CD4-positive, alpha-beta T cell (primary cell): ENCODE measurements at regions of chr1 and their contacts with region 1.

Region 1: DNA sequence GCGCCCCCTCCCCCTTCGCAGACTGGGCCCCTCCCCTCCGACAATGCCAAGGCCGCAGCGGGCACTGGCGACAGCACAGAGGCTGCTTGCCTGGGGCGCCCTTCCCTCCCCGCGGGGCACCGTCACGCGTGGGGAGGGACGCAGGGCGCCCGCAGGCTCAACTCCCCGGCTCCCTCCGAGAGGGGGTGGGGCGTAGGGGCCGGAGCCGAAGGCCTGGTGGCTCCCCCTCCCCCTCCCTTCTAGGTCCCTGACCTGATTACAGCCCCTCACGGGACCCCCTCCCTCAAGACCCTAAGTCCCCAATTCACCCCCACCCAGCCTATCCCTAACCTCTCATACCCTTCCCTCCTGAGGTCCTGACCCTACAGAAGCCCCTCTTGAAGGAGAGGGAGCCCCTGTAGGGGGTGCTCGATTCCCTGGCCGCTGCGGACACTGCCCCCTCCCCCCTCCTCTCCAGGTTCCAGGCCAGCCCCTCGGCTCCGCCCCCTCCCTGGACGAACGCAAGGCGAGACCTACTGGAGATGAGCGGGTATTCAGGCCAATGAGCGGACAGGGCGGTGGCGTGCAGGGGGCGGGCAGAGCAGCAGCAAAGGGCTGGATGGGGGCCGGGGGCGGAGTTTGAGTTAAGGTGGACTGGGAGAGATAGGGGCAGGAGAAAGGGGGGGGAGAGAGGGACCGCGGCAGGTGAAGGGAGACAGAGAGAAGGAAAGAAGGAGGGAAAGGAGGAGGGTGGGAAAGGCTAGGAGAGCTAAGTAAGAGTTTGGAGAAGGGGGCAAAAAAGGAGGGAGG is 733 bp upstream of the ZBTB7B start:
- DNase-seq: peak; percentile 94 to 99 (median 98)
- ATAC-seq: peak; percentile 73
- H3K4me3 ChIP-seq: peak overlapping the region; percentile 73
- H3K4me3 Mint-ChIP-seq: peak overlapping the region; percentile 99
- H3K27ac ChIP-seq: peak overlapping the region; percentile 92 to 96
- H3K27ac Mint-ChIP-seq: peak overlapping the region; percentile 90
- H3K4me1 ChIP-seq: peaks cover 80% of the 10 kb centered on the region
- H3K4me1 Mint-ChIP-seq: peaks cover 65% of the 10 kb centered on the region
- H3K27me3 ChIP-seq: no peaks in the 10 kb centered on the region
- H3K27me3 Mint-ChIP-seq: no peaks in the 10 kb centered on the region
- CTCF ChIP-seq: no peak

Region 2: GRCh38 chr1:154955718-154956543 is 45.9 kb before region 1 on chr1 and contains the start of gene PBXIP1:
- CTCF ChIA-PET with region 1: interaction called, 24 read pairs
- POLR2A ChIA-PET with region 1: interaction called, 28 read pairs
- intact Hi-C with region 1: loop called in 1 of 2 experiments (anchors 1 kb)
- DNase-seq: peak; percentile 64 to 95 (median 78)
- ATAC-seq: peak; percentile 40
- H3K4me3 ChIP-seq: peak within 1 kb of the TSS; percentile 69
- H3K4me3 Mint-ChIP-seq: peak within 1 kb of the TSS; percentile 95
- H3K27ac ChIP-seq: peak within 1 kb of the TSS; percentile 100
- H3K27ac Mint-ChIP-seq: peak within 1 kb of the TSS; percentile 96
- H3K4me1 ChIP-seq: peaks cover 96% of the 10 kb centered on the region
- H3K4me1 Mint-ChIP-seq: peaks cover 57% of the 10 kb centered on the region
- H3K27me3 ChIP-seq: no peaks in the 10 kb centered on the region
- H3K27me3 Mint-ChIP-seq: no peaks in the 10 kb centered on the region
- CTCF ChIP-seq: peak; percentile 40
- total RNA-seq, gene PBXIP1: 434 to 440 TPM

Region 3: GRCh38 chr1:154974063-154974807 is 27.6 kb before region 1 on chr1 and contains the start of gene CKS1B:
- CTCF ChIA-PET with region 1: interaction called, 24 read pairs
- POLR2A ChIA-PET with region 1: interaction called, 34 read pairs
- intact Hi-C with region 1: loop called (anchors 1 to 2 kb)
- DNase-seq: peak; percentile 93 to 100 (median 96)
- ATAC-seq: peak; percentile 87
- H3K4me3 ChIP-seq: peak within 1 kb of the TSS; percentile 81
- H3K4me3 Mint-ChIP-seq: no peak within 1 kb of the TSS
- H3K27ac ChIP-seq: peak within 1 kb of the TSS; percentile 94 to 99
- H3K27ac Mint-ChIP-seq: no peak within 1 kb of the TSS
- H3K4me1 ChIP-seq: peaks cover 49% of the 10 kb centered on the region
- H3K4me1 Mint-ChIP-seq: peaks cover 26% of the 10 kb centered on the region
- H3K27me3 ChIP-seq: no peaks in the 10 kb centered on the region
- H3K27me3 Mint-ChIP-seq: no peaks in the 10 kb centered on the region
- CTCF ChIP-seq: no peak
- total RNA-seq, gene CKS1B: 1.4 to 3.9 TPM

Region 4: GRCh38 chr1:155012026-155012546 is 10.2 kb after region 1 on chr1:
- CTCF ChIA-PET with region 1: interaction called, 159 read pairs
- POLR2A ChIA-PET with region 1: interaction called, 189 read pairs
- intact Hi-C with region 1: loop called (anchors 1 kb)
- DNase-seq: peak in 4 of 14 experiments; percentile 42 to 58 (median 51)
- ATAC-seq: no peak
- H3K4me3 ChIP-seq: peak overlapping the region; percentile 89
- H3K4me3 Mint-ChIP-seq: peak overlapping the region; percentile 91
- H3K27ac ChIP-seq: peak overlapping the region; percentile 87 to 88
- H3K27ac Mint-ChIP-seq: peak overlapping the region; percentile 92
- H3K4me1 ChIP-seq: peaks cover 99% of the 10 kb centered on the region
- H3K4me1 Mint-ChIP-seq: peaks cover 80% of the 10 kb centered on the region
- H3K27me3 ChIP-seq: no peaks in the 10 kb centered on the region
- H3K27me3 Mint-ChIP-seq: no peaks in the 10 kb centered on the region
- CTCF ChIP-seq: no peak

Region 5: GRCh38 chr1:155285063-155285462 is 283.2 kb after region 1 on chr1:
- CTCF ChIA-PET with region 1: no interaction called
- POLR2A ChIA-PET with region 1: no interaction called
- intact Hi-C with region 1: no loop called
- DNase-seq: no peak
- ATAC-seq: no peak
- H3K4me3 ChIP-seq: no peak overlapping the region
- H3K4me3 Mint-ChIP-seq: no peak overlapping the region
- H3K27ac ChIP-seq: no peak overlapping the region
- H3K27ac Mint-ChIP-seq: no peak overlapping the region
- H3K4me1 ChIP-seq: no peaks in the 10 kb centered on the region
- H3K4me1 Mint-ChIP-seq: no peaks in the 10 kb centered on the region
- H3K27me3 ChIP-seq: no peaks in the 10 kb centered on the region
- H3K27me3 Mint-ChIP-seq: no peaks in the 10 kb centered on the region
- CTCF ChIP-seq: no peak

Region 6: GRCh38 chr1:155295183-155295941 is 293.5 kb after region 1 on chr1:
- CTCF ChIA-PET with region 1: no interaction called
- POLR2A ChIA-PET with region 1: no interaction called
- intact Hi-C with region 1: no loop called
- DNase-seq: no peak
- ATAC-seq: no peak
- H3K4me3 ChIP-seq: no peak overlapping the region
- H3K4me3 Mint-ChIP-seq: no peak overlapping the region
- H3K27ac ChIP-seq: no peak overlapping the region
- H3K27ac Mint-ChIP-seq: no peak overlapping the region
- H3K4me1 ChIP-seq: peaks cover 13% of the 10 kb centered on the region
- H3K4me1 Mint-ChIP-seq: no peaks in the 10 kb centered on the region
- H3K27me3 ChIP-seq: peaks cover 25 to 28% of the 10 kb centered on the region in 2 experiments
- H3K27me3 Mint-ChIP-seq: peaks cover 35% of the 10 kb centered on the region
- CTCF ChIP-seq: no peak